Right ventricle myocardium inferior (tissue), 1 donor: ENCODE measurements at regions of chr15 and their contacts with region 1.

Region 1: GRCh38 chr15:52261498-52262242 is 33.9 kb downstream of the MYO5C start:
- DNase-seq: peak; percentile 82
- ATAC-seq: peak; percentile 83

Region 2: DNA sequence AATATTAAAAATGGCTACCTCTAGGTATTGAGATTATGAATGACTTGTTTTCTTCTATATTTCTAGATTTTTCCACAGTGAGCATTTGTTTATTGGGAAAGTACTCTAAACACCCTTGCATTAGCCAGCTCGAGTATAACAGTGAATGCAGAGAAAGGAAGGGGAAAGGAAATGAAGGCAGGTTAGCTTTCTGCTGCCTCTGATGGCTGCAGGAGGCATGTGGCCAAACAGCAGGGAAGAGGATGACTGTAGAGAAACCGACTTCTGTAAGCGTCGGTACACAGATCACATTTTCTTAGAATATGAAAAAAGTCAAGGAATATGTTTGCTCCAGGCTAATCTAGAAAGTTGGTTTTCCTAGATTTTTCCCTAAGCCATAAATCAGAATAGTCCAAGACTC is 90.3 kb before region 1 on chr15:
- intact Hi-C with region 1: no loop called
- DNase-seq: no peak
- ATAC-seq: no peak

Region 3: GRCh38 chr15:52295421-52296001 is 33.8 kb after region 1 on chr15 and contains the start of gene MYO5C:
- intact Hi-C with region 1: loop called (anchors 5 kb)
- DNase-seq: peak; percentile 88
- ATAC-seq: peak; percentile 88
- total RNA-seq, gene MYO5C: 3.4 TPM